Left colon (tissue), 2 donors: ENCODE measurements at regions of chr6 and their contacts with region 1.

Region 1: DNA sequence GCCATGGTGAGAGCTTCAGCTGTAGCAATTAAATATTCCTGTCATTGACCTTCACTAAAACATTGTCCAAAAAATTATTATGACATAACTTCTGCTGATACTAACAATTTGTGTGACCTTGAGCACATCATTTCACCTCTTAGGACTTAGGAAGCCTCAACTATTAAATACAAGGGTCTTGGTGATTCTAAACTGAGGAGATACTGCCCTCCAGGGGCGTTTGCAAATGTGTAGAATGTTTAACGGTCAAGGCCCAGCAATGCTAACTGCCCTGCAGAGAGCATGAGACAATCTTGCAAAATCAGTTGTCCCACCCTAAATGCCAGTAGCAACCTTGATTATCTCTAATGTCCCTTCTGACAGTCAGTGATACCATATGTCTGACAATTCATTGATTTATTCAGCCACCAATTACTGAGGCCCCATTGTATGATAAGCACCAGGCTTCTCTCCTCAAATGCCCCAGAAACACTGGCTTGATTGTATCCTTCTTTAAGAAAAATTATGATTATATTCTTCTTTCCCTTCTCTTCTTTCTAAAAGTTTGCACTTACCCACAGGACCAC is 284.1 kb upstream of the PLN start:
- DNase-seq: no peak
- ATAC-seq: no peak

Region 2: DNA sequence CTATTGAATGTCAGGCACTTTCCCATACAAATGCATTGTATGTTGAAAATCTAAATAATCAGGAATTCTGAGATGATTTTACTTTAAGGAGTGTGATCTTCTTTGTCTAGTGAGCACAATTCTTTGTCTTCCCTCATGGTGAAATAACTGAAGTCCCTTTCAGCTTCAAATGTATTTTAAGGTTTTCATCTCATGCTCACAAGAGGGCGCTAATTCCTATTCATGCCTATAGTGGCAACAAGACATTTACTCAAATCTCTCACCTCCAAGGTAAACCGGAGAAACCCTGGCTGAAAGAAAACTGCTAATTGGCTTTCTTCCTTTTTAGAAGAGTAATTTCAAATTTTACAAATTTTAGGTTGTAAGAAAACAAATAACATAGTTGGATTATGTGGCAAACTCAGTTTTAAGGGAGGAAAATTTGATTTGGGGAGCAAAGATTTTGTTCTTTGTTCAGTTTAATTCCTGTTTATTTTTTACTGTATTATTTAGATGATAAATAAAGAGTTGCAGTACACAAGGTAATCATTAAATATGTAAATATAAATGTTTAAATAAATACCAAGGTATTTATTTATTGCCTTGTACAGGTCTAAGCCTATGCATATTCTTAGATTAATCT is 287.9 kb before region 1 on chr6:
- intact Hi-C with region 1: loop called in 1 of 2 experiments (anchors 10 kb)
- DNase-seq: no peak
- ATAC-seq: no peak

Region 3: DNA sequence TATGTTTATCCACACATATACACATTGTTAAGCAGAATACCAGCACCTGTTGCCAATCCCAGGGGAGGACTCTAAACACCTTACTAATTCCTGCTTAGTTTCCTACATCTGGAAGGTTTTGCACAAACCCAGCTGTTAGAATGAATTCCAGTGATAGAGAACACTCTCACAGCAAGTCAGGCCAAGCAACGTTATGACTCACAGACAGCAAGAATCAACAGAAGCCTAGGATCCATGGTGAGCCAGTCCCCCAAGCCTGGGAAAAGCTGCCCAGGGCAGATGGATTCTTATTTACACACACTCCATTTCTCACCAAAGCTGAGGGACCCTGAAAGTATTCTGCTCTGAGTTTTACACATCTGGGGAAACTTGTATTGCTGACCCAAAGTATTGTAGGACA is 65.3 kb before region 1 on chr6:
- intact Hi-C with region 1: no loop called
- DNase-seq: no peak
- ATAC-seq: no peak